ENCODE measurements at regions of chr11 and their contacts with region 1.

Region 1: GRCh38 chr11:16820324-16821092 is 82.1 kb downstream of the C11orf58 start:
- DNase-seq: peak; percentile 90
- ATAC-seq: peak; percentile 94
- H3K4me3 Mint-ChIP-seq: no peak overlapping the region
- H3K27ac Mint-ChIP-seq: no peak overlapping the region
- H3K4me1 Mint-ChIP-seq: peaks cover 4% of the 10 kb centered on the region
- H3K27me3 Mint-ChIP-seq: no peaks in the 10 kb centered on the region

Region 2: GRCh38 chr11:16615480-16615879 is 205.0 kb before region 1 on chr11:
- CTCF ChIA-PET with region 1: no interaction called
- POLR2A ChIA-PET with region 1: no interaction called
- intact Hi-C with region 1: no loop called
- DNase-seq: no peak
- ATAC-seq: no peak
- H3K4me3 Mint-ChIP-seq: no peak overlapping the region
- H3K27ac Mint-ChIP-seq: no peak overlapping the region
- H3K4me1 Mint-ChIP-seq: peaks cover 22% of the 10 kb centered on the region
- H3K27me3 Mint-ChIP-seq: peaks cover 48% of the 10 kb centered on the region

Region 3: GRCh38 chr11:16703795-16704194 is 116.7 kb before region 1 on chr11:
- CTCF ChIA-PET with region 1: no interaction called
- POLR2A ChIA-PET with region 1: no interaction called
- intact Hi-C with region 1: no loop called
- DNase-seq: no peak
- ATAC-seq: no peak
- H3K4me3 Mint-ChIP-seq: no peak overlapping the region
- H3K27ac Mint-ChIP-seq: no peak overlapping the region
- H3K4me1 Mint-ChIP-seq: no peaks in the 10 kb centered on the region
- H3K27me3 Mint-ChIP-seq: peaks cover 9% of the 10 kb centered on the region

Region 4: GRCh38 chr11:16809886-16810668 is 10.4 kb before region 1 on chr11:
- CTCF ChIA-PET with region 1: interaction called, 23 read pairs
- POLR2A ChIA-PET with region 1: no interaction called
- intact Hi-C with region 1: no loop called
- DNase-seq: no peak
- ATAC-seq: no peak
- H3K4me3 Mint-ChIP-seq: no peak overlapping the region
- H3K27ac Mint-ChIP-seq: no peak overlapping the region
- H3K4me1 Mint-ChIP-seq: no peaks in the 10 kb centered on the region
- H3K27me3 Mint-ChIP-seq: no peaks in the 10 kb centered on the region

Region 5: DNA sequence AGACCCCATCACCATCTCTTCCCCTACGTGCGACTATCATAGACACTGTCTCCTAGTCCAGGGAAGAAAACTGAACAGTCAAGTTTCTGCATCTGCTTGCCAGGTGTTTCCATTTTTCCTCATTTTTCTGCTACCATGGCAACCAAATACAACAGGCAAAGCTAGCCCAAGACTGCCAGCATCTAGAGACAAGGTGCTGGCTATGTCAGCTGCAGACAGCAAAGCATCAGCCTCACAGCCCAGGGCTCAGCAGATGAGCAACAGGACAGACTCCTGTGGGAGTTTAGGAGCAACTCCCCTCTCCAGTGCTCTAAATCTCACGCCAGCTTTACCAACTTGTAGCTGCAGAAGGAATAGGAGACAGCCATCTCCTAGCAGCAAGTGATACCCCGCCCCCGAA is 42.2 kb after region 1 on chr11:
- CTCF ChIA-PET with region 1: interaction called, 13 read pairs
- POLR2A ChIA-PET with region 1: interaction called, 4 read pairs
- intact Hi-C with region 1: no loop called
- DNase-seq: peak; percentile 25
- ATAC-seq: no peak
- H3K4me3 Mint-ChIP-seq: no peak overlapping the region
- H3K27ac Mint-ChIP-seq: no peak overlapping the region
- H3K4me1 Mint-ChIP-seq: peaks cover 34% of the 10 kb centered on the region
- H3K27me3 Mint-ChIP-seq: no peaks in the 10 kb centered on the region

Region 6: DNA sequence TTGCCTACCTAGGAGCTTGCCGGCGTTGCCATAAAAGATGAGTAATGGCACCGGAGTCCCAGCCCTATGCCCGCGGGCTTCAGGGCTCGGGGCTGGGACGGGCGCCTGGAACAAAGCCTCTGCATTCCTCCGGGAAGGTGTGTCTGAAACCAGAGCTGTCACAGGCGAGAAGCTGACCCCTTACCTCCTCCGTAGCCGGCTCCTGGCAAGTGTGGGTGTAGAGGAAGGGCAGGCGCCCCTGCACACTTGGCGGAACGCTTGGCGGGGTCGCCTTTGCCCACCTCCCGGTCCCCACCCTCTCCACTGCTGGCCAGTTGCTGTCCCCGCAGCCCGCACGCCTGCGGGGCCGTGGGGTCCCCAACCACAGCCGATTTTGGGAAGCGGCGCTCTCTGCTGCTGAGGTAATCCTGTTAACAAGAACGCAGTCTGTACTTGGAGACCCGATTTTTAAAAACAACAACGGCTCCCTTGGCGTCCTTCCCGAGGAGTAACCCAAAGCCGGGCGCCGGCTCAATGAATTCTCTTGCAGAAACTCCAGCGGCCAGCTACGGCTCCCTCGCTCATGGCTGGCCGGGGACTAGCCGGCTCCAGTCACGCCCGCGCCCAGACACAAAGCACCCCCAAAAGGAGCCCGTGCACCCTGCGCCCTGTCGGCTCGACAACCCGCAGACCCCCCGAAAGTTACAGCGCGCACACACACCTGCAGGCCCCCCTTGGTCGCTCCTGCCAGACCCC is 104.5 kb after region 1 on chr11:
- CTCF ChIA-PET with region 1: interaction called, 8 read pairs
- POLR2A ChIA-PET with region 1: no interaction called
- intact Hi-C with region 1: loop called in 1 of 2 experiments (anchors 10 kb)
- DNase-seq: peak; percentile 17
- ATAC-seq: no peak
- H3K4me3 Mint-ChIP-seq: peak overlapping the region; percentile 67
- H3K27ac Mint-ChIP-seq: no peak overlapping the region
- H3K4me1 Mint-ChIP-seq: peaks cover 12% of the 10 kb centered on the region
- H3K27me3 Mint-ChIP-seq: peaks cover 35% of the 10 kb centered on the region

Region 7: GRCh38 chr11:17014838-17015626 is 194.5 kb after region 1 on chr11:
- CTCF ChIA-PET with region 1: interaction called, 5 read pairs
- POLR2A ChIA-PET with region 1: no interaction called
- intact Hi-C with region 1: loop called in 1 of 2 experiments (anchors 5 kb)
- DNase-seq: peak; percentile 55
- ATAC-seq: peak; percentile 72
- H3K4me3 Mint-ChIP-seq: peak overlapping the region; percentile 77
- H3K27ac Mint-ChIP-seq: peak overlapping the region; percentile 66
- H3K4me1 Mint-ChIP-seq: peaks cover 7% of the 10 kb centered on the region
- H3K27me3 Mint-ChIP-seq: peaks cover 12% of the 10 kb centered on the region

Measured in activated CD4-positive, alpha-beta T cell treated with anti-CD3 and anti-CD28 coated beads for 36 hours (primary cell).